ENCODE measurements at regions of chr9 and their contacts with region 1.

Region 1: DNA sequence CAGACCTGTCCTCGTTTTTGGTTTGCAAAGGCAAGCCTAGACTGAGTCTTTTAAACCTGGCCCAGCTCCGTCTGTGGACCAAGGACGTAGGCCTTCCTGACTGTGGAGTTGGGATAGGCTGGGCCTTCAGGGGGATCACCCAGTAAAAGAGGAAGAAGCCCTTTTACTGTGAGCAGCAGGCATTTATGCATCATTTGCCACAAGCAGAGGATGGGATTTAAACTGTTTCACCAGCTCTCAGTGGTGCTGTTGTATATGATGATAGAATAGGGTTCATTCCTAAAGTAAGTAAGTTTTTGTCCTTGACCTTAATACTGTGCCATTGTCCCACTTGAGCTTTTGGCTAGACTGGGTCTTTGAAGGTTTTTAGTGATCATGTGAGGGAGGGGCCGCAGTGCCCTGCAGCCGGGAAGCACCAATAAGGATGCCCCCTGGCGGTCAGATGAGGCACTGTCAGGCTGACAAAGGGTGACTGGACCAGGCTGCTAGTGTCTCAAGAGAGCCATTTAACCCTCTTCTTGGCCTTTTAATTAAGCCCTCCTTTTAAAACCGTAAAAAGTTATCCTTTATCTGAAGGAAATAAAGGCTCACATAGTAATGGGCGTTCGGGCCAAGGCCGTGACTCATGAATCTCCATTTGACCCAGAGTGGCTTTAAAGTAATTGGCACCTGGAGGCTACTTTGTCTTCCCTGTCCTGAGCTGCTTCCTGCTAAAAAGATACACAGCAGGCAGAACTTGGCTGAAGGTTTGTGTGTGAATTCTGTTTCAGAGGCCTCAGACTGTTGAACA is 74.0 kb downstream of the UBAP1 start:
- DNase-seq: no peak
- H3K4me3 ChIP-seq: no peak overlapping the region
- H3K27ac ChIP-seq: peak overlapping the region; percentile 32
- H3K27me3 ChIP-seq: no peaks in the 10 kb centered on the region
- CTCF ChIP-seq: peak; percentile 89

Region 2: GRCh38 chr9:34010979-34011378 is 241.9 kb before region 1 on chr9:
- CTCF ChIA-PET with region 1: interaction called, 10 read pairs
- POLR2A ChIA-PET with region 1: no interaction called
- DNase-seq: no peak
- H3K4me3 ChIP-seq: no peak overlapping the region
- H3K27ac ChIP-seq: no peak overlapping the region
- H3K27me3 ChIP-seq: no peaks in the 10 kb centered on the region
- CTCF ChIP-seq: peak; percentile 44

Region 3: DNA sequence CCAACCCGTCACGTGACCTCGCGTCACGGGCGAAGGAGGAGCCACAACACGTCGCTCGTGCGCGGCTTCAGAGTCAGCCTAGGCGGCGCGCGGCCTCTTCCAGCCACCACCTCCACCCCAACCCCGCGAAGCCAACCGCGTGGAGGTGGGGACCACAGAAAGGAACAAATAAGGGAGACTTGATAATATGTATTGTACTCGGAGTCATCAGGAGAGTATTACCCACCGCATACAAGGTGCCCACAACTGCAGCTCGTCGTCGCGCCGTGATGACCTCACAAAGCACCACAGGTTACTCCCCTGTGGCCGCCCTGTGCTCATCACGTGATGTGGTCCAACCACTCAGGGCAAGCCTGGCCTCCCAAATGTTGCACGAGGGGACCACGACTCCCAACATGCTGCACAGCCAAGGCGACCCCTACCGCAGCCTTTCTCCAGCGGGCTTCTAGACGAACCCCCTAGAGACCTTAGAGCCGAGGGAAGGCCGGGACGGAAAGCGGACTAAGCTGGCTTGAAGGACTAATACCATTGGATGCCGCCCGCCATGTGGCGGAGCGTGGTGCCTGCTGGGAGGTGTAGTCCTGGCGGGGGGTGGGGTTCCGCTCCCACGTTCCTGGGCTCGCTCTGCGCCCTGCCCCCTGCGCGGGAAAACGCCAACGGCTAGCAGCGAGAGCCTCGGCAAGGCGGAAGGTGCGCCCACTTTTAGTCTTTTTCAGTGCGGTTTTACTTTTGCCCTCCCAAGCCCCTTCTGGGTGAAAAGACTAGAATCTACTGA is 203.8 kb before region 1 on chr9:
- CTCF ChIA-PET with region 1: interaction called, 11 read pairs
- POLR2A ChIA-PET with region 1: no interaction called
- DNase-seq: peak; percentile 92
- H3K4me3 ChIP-seq: peak overlapping the region; percentile 93
- H3K27ac ChIP-seq: peak overlapping the region; percentile 93
- H3K27me3 ChIP-seq: no peaks in the 10 kb centered on the region
- CTCF ChIP-seq: peak; percentile 15; the same call in 1 of the 2 replicates

Region 4: GRCh38 chr9:34178520-34179212 is 74.2 kb before region 1 on chr9 and contains the start of gene UBAP1:
- CTCF ChIA-PET with region 1: interaction called, 12 read pairs
- POLR2A ChIA-PET with region 1: interaction called, 8 read pairs
- DNase-seq: peak; percentile 86
- H3K4me3 ChIP-seq: peak within 1 kb of the TSS; percentile 72
- H3K27ac ChIP-seq: peak within 1 kb of the TSS; percentile 68
- H3K27me3 ChIP-seq: no peaks in the 10 kb centered on the region
- CTCF ChIP-seq: no peak
- polyA plus RNA-seq, gene UBAP1: 56.7 and 57.3 TPM in 2 replicates

Region 5: DNA sequence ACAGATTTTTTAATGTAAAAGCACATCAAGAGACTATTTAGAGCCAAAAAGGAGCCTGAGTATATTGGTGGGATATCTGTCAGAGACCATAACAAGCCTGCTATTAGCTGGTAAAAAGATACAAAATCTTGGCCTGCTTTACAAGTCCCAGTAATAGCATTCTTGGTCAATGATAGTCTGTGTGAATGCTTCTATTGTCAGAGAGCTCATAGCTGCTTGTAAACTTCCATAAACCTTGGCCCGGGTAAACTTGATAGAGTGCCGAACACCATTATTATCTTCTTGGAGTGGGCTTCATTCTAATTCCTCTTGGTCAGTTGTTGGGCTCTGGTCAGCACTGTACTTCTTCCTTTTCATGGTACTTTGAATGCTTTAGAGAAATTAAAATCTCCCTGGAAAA is 10.0 kb before region 1 on chr9:
- CTCF ChIA-PET with region 1: interaction called, 20 read pairs
- POLR2A ChIA-PET with region 1: no interaction called
- DNase-seq: no peak
- H3K4me3 ChIP-seq: no peak overlapping the region
- H3K27ac ChIP-seq: no peak overlapping the region
- H3K27me3 ChIP-seq: no peaks in the 10 kb centered on the region
- CTCF ChIP-seq: no peak

Region 6: DNA sequence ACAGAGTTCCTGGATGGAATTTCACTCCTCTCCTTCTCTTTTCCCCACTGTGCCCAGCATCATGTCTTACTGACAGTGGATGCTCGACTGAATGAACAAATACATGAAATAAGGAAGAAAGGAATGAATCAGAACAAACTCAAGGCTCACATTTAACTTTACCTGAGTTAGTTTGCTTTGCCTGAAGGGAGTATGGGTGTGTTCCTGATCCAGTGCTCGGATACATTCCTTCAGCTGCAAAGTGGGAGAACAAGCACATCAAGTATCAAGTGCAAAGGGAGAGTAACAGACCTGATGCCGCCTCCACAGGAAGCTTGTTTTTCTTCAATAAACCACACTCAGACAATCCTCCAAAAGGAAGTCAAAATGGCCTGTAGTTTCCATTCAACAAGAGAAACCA is 10.1 kb after region 1 on chr9:
- CTCF ChIA-PET with region 1: interaction called, 16 read pairs
- POLR2A ChIA-PET with region 1: interaction called, 3 read pairs
- DNase-seq: no peak
- H3K4me3 ChIP-seq: no peak overlapping the region
- H3K27ac ChIP-seq: no peak overlapping the region
- H3K27me3 ChIP-seq: no peaks in the 10 kb centered on the region
- CTCF ChIP-seq: no peak